CD8-positive, alpha-beta memory T cell (primary cell): ENCODE measurements at regions of chr9 and their contacts with region 1.

Region 1: DNA sequence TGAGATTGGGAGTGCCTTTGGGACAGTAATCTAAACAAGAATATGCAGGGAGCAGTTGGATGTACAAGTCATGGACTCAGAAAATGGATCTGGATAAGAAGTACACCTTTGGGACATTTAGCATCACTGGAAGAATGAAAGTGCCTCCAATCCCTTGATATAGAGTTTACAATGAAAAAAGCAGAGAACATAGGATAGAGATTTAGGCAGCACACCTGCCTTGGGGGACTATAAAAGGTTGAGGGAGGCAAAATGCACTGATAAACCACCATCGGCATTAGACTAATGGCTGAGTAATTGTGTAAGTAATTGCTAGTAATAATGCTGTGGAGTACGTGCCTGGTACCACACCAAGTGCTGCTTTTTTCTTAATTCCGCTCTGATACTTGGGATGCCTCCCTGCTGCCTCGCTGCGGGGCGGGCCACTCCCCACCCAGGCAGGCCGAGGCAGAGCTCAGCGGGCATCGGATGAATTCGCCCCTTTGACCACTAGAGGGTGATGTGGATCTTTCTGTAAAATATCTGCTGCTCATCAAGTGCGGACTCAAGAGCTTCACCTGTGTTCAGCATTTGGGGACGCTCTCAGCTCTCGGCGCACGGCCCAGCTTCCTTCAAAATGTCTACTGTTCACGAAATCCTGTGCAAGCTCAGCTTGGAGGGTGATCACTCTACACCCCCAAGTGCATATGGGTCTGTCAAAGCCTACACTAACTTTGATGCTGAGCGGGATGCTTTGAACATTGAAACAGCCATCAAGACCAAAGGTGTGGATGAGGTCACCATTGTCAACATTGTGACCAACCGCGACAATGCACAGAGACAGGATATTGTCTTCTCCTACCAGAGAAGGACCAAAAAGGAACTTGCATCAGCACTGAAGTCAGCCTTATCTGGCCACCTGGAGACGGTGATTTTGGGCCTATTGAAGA is 99.9 kb downstream of the ANKRD18B start:
- DNase-seq: peak; percentile 37 to 72 (median 66)
- H3K4me3 ChIP-seq: no peak overlapping the region
- H3K4me3 Mint-ChIP-seq: no peak overlapping the region
- H3K27ac ChIP-seq: no peak overlapping the region
- H3K27ac Mint-ChIP-seq: no peak overlapping the region
- H3K4me1 ChIP-seq: no peaks in the 10 kb centered on the region
- H3K4me1 Mint-ChIP-seq: peaks cover 4 to 5% (median 5%) of the 10 kb centered on the region in 3 donors
- H3K27me3 ChIP-seq: no peaks in the 10 kb centered on the region
- H3K27me3 Mint-ChIP-seq: peaks cover 21 to 43% of the 10 kb centered on the region in 2 donors

Region 2: DNA sequence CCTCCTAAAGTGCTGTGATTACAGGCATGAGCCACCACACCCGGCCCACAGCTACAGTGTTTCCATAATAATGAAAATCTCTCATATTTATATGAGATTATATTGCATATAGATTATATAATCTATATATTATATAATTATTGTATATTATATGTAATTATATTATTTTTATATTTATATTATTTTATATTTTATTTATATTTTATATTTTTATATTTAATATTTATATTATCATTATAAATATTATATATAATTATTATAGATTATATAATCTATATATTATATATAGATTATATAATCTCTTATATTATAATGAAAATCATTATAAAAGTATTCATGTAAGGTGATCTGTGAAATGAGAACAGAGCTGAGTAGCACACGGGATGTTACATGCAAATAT is 88.4 kb before region 1 on chr9:
- CTCF ChIA-PET with region 1: no interaction called
- POLR2A ChIA-PET with region 1: no interaction called
- DNase-seq: no peak
- H3K4me3 ChIP-seq: no peak overlapping the region
- H3K4me3 Mint-ChIP-seq: no peak overlapping the region
- H3K27ac ChIP-seq: no peak overlapping the region
- H3K27ac Mint-ChIP-seq: peak overlapping the region in 1 of 8 donors; percentile 36
- H3K4me1 ChIP-seq: no peaks in the 10 kb centered on the region
- H3K4me1 Mint-ChIP-seq: no peaks in the 10 kb centered on the region
- H3K27me3 ChIP-seq: no peaks in the 10 kb centered on the region
- H3K27me3 Mint-ChIP-seq: peaks cover 6 to 15% of the 10 kb centered on the region in 2 donors

Region 3: DNA sequence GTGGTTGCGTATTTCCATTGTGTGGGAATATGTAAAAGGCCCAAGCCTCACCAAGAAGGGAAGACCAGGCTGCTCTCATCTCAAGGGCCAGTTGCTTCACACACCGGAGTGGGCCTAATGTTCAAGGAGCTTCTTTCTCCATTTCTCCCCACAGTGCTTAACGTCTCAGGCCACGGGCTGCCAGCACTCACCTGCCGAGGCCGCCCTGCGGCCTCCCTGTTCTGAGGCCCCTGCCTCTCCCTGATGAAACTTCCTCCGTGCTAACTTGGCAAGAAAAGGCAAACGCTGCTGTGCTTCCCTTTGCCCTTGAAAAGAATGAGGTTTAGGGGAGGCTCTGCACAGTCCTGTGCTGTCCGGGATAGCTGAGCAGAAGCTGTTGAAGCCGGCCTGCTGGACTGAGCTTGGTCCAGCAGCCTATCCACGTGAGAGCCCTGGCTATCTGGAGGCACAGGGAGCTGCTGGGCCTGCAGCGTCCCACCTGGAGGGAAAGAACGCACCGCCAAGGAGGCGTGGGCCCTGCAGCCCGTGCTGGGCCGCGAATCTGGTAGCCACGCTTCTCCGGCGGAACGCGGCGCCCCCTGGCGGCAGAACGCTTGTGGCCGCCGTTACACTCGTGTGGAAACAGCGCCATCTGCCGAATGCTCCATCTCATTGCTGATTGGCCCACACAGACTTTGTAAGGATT is 97.9 kb after region 1 on chr9:
- CTCF ChIA-PET with region 1: interaction called, 120 read pairs
- POLR2A ChIA-PET with region 1: no interaction called
- DNase-seq: peak; percentile 77 to 87 (median 80)
- H3K4me3 ChIP-seq: no peak overlapping the region
- H3K4me3 Mint-ChIP-seq: no peak overlapping the region
- H3K27ac ChIP-seq: no peak overlapping the region
- H3K27ac Mint-ChIP-seq: no peak overlapping the region
- H3K4me1 ChIP-seq: no peaks in the 10 kb centered on the region
- H3K4me1 Mint-ChIP-seq: peaks cover 0 to 10% (median 7%) of the 10 kb centered on the region in 3 donors
- H3K27me3 ChIP-seq: no peaks in the 10 kb centered on the region
- H3K27me3 Mint-ChIP-seq: peaks cover 10 to 24% of the 10 kb centered on the region in 2 donors